CD4-positive, alpha-beta T cell (primary cell): ENCODE measurements at regions of chr9 and their contacts with region 1.

Region 1: DNA sequence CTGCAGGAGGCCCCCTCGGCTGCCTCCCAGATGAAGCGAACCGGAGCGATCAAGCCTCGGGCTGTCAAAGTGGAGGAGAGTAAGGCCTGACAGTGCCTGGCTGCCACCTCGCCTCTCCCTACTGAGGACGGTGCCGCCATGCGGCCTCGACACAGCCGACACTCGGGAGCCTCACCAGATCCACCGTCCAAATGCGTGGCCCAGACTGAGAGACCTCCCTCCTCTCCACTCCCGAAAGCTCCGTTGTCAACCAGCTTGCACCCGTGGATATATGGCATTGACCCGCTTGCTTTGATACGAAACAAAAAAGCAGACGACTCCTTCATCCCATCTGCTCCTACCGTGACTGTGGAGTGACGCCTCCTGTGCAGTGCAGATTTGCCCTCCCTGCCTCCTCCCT is 6.9 kb upstream of the POMT1 start:
- DNase-seq: no peak
- ATAC-seq: no peak
- H3K4me3 ChIP-seq: no peak overlapping the region
- H3K4me3 Mint-ChIP-seq: no peak overlapping the region
- H3K27ac ChIP-seq: no peak overlapping the region
- H3K27ac Mint-ChIP-seq: peak overlapping the region; percentile 55
- H3K4me1 ChIP-seq: peaks cover 35% of the 10 kb centered on the region
- H3K4me1 Mint-ChIP-seq: peaks cover 38% of the 10 kb centered on the region
- H3K27me3 ChIP-seq: no peaks in the 10 kb centered on the region
- H3K27me3 Mint-ChIP-seq: no peaks in the 10 kb centered on the region
- CTCF ChIP-seq: no peak

Region 2: DNA sequence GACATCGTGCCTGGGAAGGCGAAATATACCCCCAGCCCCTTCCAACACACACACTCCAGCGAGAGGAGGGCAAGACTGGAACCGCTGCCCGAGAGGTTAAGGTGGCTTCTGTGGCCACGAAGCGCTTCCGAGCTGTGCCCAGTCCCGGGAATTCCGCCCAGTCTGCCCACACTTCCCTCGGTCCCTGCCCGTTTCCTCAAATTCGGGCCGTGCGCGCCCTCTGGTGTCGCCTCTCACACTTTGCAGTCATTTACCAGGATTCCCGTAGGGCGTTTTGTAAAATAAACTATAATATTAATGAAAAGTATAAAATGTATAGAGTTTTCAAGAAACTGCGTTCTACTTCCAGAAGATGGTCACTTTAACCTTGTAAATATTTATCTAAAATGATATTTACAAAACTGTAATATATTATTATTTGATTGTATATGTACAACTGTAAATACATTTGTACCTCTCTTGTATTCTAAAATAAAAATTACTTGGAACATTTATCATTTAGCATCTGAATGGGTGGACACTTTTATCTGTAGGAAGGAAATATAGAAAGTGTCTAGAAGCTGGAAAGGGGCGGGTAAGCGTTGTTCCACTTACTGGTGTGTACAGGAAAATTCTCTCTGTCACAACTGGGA is 813.2 kb before region 1 on chr9:
- CTCF ChIA-PET with region 1: no interaction called
- POLR2A ChIA-PET with region 1: no interaction called
- intact Hi-C with region 1: no loop called
- DNase-seq: peak; percentile 24 to 81 (median 52)
- ATAC-seq: peak; percentile 48
- H3K4me3 ChIP-seq: peak overlapping the region; percentile 70
- H3K4me3 Mint-ChIP-seq: peak overlapping the region; percentile 97
- H3K27ac ChIP-seq: no peak overlapping the region
- H3K27ac Mint-ChIP-seq: peak overlapping the region; percentile 24
- H3K4me1 ChIP-seq: peaks cover 17% of the 10 kb centered on the region
- H3K4me1 Mint-ChIP-seq: peaks cover 12% of the 10 kb centered on the region
- H3K27me3 ChIP-seq: peaks cover 5 to 6% of the 10 kb centered on the region in 2 experiments
- H3K27me3 Mint-ChIP-seq: peaks cover 27% of the 10 kb centered on the region
- CTCF ChIP-seq: peak; percentile 97

Region 3: GRCh38 chr9:131478421-131478868 is 17.3 kb before region 1 on chr9:
- CTCF ChIA-PET with region 1: no interaction called
- POLR2A ChIA-PET with region 1: interaction called, 7 read pairs
- intact Hi-C with region 1: loop called in 1 of 2 experiments (anchors 2 kb)
- DNase-seq: peak; percentile 40 to 76 (median 57)
- ATAC-seq: peak; percentile 65
- H3K4me3 ChIP-seq: no peak overlapping the region
- H3K4me3 Mint-ChIP-seq: no peak overlapping the region
- H3K27ac ChIP-seq: no peak overlapping the region
- H3K27ac Mint-ChIP-seq: peak overlapping the region; percentile 8
- H3K4me1 ChIP-seq: no peaks in the 10 kb centered on the region
- H3K4me1 Mint-ChIP-seq: peaks cover 6% of the 10 kb centered on the region
- H3K27me3 ChIP-seq: no peaks in the 10 kb centered on the region
- H3K27me3 Mint-ChIP-seq: no peaks in the 10 kb centered on the region
- CTCF ChIP-seq: peak; percentile 65